Activated CD4-positive, alpha-beta T cell treated with anti-CD3 and anti-CD28 coated beads, Interleukin-2, amount 10 ng/mL, durations not matched to agents 24 days and 14 days (primary cell): ENCODE measurements at regions of chr17 and their contacts with region 1.

Region 1: DNA sequence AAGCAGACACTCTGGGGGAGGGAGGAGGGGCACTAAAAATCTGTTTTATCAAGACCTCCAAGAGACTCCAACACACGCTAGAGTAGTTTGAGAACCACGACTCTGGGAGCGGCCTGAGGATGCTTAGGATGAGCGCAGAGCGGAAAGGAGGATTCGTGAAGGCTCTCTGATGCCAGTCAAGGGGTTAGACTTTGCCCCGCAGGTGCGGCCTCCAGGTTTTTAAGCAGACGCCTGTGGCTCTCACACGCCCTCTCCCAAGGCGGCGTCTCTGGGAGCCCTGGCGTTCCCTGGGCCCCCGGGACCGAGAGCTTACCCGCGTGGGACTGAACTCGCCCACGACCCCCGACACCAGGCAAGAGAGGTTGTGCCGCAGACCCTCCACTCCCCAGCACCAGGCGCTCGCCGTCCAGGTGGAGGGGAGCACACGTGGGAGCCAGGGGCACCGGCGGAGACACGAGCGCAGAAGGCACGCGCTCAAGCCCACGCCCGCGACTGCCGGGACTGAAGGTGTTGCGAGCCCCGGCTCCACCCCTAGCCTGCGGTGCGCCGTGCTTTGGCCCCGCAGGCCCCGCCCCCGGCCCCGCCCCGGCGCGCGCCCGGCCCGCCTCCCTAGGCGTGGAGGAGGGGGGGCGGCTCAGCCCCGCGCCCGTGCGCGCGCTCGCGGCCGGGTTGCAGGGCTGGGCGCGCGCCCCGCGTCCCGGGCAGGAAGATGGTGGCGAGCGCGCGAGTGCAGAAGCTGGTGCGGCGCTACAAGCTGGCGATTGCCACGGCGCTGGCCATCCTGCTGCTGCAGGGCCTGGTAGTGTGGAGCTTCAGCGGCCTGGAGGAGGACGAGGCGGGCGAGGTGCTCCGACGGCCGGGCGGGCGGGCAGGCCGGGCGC is at the start of gene XYLT2:
- DNase-seq: peak; percentile 97
- H3K4me3 Mint-ChIP-seq: peak within 1 kb of the TSS; percentile 95
- H3K27ac Mint-ChIP-seq: peak within 1 kb of the TSS; percentile 96
- H3K4me1 Mint-ChIP-seq: peaks cover 30% of the 10 kb centered on the region
- H3K27me3 Mint-ChIP-seq: peaks cover under 1% of the 10 kb centered on the region
- total RNA-seq, gene XYLT2: 65.3 and 66.5 TPM in 2 replicates

Region 2: DNA sequence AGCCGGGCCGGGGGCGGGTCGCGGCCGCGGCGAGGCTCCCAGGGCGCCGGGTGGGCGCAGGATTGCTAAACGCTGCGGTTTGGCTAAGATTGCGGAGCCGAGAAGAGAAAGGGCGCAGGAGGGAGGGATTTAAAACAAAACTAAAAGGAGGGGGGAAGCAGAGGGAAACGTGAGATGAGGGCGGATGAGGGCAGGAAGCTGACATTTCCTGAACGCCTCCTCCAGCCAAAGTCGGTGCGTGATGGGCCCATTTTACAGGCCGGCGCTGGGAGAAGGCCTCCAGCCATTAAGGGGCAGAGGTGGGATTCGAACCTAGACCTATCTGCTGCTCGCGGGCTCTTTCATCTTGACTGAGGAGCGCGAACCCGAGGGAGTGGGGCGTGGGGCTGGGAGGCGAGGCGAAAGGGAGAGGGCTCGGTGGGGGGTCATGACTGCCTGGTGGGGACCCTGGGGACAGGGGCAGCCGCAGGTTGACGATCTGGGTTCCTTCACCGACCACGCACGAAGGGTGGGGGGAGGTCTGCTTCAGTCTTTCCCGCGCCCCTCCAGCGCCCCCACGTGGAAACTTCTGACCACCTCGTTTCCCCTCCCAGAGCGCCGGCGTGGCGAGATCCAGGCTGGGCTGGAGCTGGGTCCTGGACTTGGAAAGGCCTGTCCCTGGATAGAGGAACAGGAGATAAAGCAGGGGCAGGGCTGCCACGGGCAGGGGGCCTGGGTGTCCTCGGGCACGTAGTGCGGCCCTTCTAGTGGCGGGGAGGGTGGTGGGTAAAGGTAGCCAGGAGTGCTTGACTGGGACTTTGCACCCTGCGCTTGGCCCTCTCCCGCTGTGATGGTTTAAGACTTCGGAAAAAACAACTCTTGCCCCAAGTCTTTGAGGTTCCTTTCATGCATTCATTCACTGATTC is 494.0 kb before region 1 on chr17:
- intact Hi-C with region 1: no loop called
- DNase-seq: peak; percentile 88
- H3K4me3 Mint-ChIP-seq: peak overlapping the region; percentile 87
- H3K27ac Mint-ChIP-seq: peak overlapping the region; percentile 81
- H3K4me1 Mint-ChIP-seq: peaks cover 15% of the 10 kb centered on the region
- H3K27me3 Mint-ChIP-seq: peaks cover 17% of the 10 kb centered on the region

Region 3: DNA sequence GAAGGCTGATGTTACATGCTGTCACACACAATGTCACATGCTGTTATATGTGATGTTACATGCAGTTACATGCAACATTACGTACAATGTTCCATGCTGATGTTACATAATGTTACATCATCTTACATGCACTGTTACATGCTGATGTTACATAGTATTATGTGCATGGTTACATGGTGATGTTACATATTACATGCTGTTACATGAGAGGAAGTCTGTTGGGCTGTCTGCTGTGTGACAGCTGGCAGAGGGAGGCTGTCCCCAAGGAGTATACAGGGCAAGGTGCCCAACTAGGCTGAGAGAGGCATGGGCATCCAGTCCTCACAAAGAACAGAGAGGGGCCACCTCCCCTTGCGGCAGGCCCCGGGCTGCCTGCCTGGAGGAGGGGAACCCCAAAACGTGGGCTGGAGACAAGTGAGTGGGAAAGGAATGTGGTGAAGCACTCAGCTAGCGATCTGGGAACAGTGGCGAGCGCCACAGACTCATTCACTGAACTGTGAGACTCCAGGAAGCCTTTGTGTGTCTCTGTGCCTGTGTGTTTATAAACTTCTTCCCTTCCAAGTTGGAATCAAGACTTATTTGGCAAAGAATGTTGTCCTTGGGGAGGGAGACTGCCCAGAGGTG is 40.8 kb before region 1 on chr17:
- intact Hi-C with region 1: loop called (anchors 5 kb)
- DNase-seq: no peak
- H3K4me3 Mint-ChIP-seq: no peak overlapping the region
- H3K27ac Mint-ChIP-seq: peak overlapping the region; percentile 49
- H3K4me1 Mint-ChIP-seq: peaks cover 22% of the 10 kb centered on the region
- H3K27me3 Mint-ChIP-seq: no peaks in the 10 kb centered on the region

Region 4: DNA sequence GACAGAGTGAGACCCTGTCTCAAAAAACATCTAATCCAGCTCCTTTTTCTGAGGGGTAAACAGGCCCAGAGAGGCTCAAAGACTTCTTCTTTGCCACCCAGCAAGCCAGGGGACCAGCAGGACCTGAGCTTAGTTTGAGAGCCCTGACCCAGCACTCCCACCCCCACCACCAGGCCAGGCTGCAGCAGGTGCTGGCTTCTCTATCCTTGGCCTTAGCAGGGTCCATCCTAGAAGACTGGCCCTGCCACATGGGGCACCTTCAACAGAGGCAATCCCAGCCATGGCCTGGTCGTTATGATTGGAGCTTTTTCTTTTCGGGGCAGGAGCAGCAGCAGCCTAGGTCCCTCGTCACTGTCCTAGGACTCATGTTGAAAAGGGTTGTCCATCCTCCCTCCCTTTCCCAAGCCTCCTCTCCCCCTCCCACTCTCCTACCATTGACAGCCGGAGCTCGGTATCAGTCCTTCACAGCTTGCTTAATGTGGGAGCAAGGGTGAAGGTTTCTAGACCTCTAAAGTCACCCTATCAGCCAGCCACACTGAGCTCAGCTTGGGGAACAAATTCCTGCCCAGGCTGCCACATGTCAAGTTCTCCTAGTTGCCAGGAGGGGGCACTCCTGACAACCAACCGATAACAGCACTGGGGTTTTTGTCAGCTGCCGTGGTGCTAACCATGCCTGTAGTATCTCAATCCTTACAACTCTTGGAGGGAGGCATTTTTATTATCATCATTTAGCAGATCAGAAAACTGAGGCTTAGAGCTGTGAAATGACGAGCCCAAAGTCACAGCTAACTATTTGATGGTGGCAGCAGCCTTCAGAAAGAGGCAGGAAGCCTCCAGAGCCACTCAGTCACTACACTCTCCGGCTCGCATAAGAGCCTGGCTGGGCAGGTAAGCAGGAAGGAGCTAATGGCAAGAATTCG is 16.1 kb after region 1 on chr17:
- intact Hi-C with region 1: loop called (anchors 1 kb)
- DNase-seq: peak; percentile 86
- H3K4me3 Mint-ChIP-seq: no peak overlapping the region
- H3K27ac Mint-ChIP-seq: peak overlapping the region; percentile 80
- H3K4me1 Mint-ChIP-seq: peaks cover 14% of the 10 kb centered on the region
- H3K27me3 Mint-ChIP-seq: no peaks in the 10 kb centered on the region